Lower leg skin (tissue), 4 donors: ENCODE measurements at regions of chr10 and their contacts with region 1.

Region 1: DNA sequence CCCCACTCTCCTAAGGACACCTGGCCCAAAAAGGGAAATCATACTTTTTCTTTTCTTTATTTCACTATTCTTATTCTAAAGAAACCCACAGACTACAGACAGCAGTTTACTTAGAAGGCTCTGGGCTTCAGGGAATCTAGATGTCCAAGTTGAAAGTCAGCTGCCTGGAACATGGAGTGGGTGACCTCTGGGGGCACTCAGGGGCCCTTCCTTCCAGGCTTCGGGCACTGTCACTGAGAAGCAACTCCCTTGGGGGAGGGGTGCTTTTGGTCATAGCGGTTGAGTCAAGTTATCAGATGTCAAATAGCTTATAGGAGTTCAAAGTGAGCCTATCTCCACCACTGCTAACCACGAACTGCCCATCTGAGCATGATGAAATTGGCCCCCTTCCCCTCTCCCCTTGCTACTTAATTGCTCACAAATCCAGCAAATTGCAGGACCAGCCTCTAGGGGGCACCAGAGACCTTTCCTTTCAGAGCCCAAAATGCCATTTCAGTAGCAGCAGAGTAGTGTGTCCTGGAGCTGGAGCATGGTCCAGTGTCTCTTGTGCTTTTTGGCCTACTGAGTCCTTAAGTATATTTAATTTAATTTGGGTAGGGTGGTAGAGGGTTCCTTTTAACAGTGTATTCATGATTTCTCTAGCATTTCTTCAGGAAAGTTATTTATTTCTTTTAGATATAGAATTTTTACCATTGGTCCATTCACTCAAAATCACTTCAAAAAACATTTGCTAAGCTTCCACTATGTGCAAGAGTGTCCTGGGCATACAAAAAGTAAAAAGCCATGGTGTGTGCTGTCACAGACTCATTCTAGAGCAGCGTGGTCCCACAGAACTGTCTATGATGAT is 463.8 kb downstream of the KCNMA1 start:
- DNase-seq: peak; percentile 63 to 92
- H3K4me3 ChIP-seq: no peak overlapping the region
- CTCF ChIP-seq: peak in 1 of 3 donors; percentile 54
- POLR2A ChIP-seq: no peak

Region 2: GRCh38 chr10:77637859-77638765 is 464.3 kb after region 1 on chr10:
- intact Hi-C with region 1: loop called (anchors 2 kb)
- DNase-seq: no peak
- H3K4me3 ChIP-seq: peak overlapping the region; percentile 0
- CTCF ChIP-seq: no peak
- POLR2A ChIP-seq: no peak

Region 3: DNA sequence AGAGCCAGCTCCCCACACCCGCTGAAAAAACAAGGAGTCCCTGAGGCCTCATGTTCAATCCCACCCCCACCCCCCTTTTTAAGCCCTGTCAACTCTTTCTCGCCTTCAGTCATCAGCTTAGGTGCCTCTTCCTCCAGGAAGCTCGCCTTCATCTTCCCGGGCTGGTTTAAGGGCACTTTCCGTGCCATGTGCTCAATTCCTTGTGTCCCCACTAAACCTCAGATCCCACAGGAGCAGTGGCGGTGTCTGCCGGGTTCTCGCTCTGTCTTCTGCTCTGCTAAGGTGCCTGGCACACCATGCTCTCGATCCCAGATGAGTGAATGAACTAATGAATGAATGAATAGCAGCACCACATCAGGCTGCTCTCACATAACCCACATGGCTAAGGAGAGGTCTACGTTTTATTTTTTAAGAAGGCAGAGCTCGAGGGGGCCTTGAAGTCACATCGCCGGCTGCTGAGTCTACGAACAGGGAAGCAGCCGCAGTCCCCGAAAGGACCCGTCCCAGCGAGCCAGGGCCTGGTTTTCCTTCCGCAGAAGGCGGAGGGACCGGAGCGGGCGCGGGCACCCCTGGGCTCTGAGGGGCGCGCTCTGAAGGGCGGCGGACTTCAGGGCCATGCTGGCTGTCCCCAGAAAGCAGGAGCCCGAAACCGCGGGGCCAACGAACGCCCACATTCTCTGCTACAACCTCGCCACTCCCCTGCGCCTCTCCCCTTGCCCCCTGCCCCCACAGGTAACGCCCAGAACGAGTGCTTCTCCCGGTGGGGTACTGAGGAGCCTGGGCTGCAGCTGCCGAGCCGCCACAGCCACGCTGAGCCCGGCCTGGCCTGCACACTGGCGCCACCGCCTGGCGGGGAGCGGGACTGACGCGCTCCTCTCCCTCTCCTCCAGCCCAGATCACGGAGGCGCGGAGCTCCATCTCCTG is 537.2 kb after region 1 on chr10:
- intact Hi-C with region 1: loop called (anchors 10 kb)
- DNase-seq: peak; percentile 47 to 95
- H3K4me3 ChIP-seq: no peak overlapping the region
- CTCF ChIP-seq: peak in 1 of 3 donors; percentile 87
- POLR2A ChIP-seq: no peak